Endothelial cell of umbilical vein (primary cell): ENCODE measurements at regions of chr10 and their contacts with region 1.

Region 1: DNA sequence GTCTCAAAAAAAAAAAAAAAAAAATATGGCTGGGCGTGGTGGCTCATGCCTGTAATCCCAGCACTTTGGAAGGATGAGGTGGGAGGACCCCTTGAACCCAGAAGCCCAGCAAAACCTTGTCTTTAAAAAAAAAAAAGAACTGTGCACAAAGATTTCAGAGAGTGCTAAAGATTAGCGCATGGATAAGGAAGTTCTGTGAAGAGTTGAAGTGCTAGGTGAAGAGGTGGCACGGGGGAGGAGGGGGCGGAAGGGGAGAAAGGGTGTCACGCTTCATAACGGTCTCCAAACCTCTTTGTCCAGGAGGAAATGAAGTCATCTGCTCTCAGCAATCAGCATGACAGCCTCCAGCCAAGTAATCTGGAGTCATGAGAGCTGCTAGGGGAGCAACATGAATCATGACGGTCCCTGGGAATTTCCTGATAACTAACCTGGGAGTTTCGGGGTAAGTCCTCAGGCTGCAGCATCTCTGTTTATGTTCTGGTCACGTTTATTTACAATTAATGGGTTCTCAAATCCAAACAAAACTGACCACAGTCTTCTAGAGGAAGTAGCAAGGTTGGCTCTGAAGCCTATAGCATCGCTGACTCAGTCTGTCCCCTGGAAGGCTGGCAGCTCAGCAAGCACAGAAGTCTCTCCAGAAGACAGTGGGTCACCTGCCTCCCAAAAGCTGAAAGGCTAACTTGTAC is 1.9 kb upstream of the PLAU start:
- DNase-seq: peak; percentile 94
- H3K4me3 ChIP-seq: no peak overlapping the region
- H3K27ac ChIP-seq: peak overlapping the region; percentile 90
- H3K4me1 ChIP-seq: peaks cover 59% of the 10 kb centered on the region
- H3K27me3 ChIP-seq: no peaks in the 10 kb centered on the region
- CTCF ChIP-seq: no peak
- POLR2A ChIP-seq: peak; percentile 50

Region 2: GRCh38 chr10:73894245-73894971 is 14.6 kb before region 1 on chr10:
- CTCF ChIA-PET with region 1: interaction called, 59 read pairs
- POLR2A ChIA-PET with region 1: interaction called, 5 read pairs
- dilution Hi-C with region 1: no loop called
- intact Hi-C with region 1: loop called (anchors 1 kb)
- DNase-seq: peak; percentile 90
- H3K4me3 ChIP-seq: no peak overlapping the region
- H3K27ac ChIP-seq: peak overlapping the region; percentile 80
- H3K4me1 ChIP-seq: peaks cover 23% of the 10 kb centered on the region
- H3K27me3 ChIP-seq: no peaks in the 10 kb centered on the region
- CTCF ChIP-seq: no peak
- POLR2A ChIP-seq: peak; percentile 45

Region 3: DNA sequence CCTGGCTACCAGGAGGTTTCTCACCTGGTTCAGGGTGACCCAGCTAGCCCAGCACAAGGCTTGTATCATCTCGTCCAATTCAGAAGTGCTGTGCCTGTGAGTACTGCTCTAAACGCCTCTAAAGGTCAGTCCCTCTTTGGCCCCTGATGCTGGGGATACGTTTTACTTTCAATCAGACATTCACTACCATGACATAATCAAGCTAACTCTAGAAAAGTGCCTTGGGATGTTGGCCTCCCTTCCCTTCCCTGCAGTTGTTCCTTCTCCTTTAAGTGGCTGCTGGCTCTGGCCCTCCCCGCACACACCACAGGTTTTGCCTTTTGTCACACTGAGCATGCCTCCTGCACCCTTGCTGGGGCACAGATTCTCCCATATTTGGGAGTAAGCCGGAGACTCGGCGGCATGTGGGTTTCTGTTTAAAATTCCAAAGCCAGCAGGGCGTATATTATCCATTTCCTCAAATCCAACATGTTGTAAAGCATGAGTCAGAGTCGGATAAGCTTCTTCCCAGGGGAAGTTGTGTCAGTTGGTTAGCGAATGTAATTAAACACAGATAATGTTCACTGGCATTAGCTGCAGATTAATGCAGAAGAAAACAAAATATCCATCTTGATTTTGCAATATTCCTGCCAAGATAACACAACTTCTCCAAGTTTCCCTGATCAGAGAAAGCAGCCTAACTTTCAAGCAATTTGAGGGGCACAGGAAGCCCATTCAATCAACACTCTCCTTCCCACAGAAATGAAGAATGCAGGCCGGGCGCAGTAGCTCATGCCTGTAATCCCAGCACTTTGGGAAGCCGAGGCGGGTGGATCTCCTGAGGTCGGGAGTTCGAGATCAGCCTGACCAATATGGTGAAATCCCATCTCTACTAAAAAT is 57.1 kb after region 1 on chr10:
- CTCF ChIA-PET with region 1: no interaction called
- POLR2A ChIA-PET with region 1: interaction called, 3 read pairs
- dilution Hi-C with region 1: no loop called
- intact Hi-C with region 1: loop called (anchors 2 kb)
- DNase-seq: peak; percentile 94
- H3K4me3 ChIP-seq: peak overlapping the region in 1 of 3 experiments; percentile 7
- H3K27ac ChIP-seq: peak overlapping the region; percentile 73
- H3K4me1 ChIP-seq: peaks cover 30% of the 10 kb centered on the region
- H3K27me3 ChIP-seq: no peaks in the 10 kb centered on the region
- CTCF ChIP-seq: no peak
- POLR2A ChIP-seq: no peak